SK-N-SH (cell line): ENCODE measurements at regions of chr7 and their contacts with region 1.

Region 1: DNA sequence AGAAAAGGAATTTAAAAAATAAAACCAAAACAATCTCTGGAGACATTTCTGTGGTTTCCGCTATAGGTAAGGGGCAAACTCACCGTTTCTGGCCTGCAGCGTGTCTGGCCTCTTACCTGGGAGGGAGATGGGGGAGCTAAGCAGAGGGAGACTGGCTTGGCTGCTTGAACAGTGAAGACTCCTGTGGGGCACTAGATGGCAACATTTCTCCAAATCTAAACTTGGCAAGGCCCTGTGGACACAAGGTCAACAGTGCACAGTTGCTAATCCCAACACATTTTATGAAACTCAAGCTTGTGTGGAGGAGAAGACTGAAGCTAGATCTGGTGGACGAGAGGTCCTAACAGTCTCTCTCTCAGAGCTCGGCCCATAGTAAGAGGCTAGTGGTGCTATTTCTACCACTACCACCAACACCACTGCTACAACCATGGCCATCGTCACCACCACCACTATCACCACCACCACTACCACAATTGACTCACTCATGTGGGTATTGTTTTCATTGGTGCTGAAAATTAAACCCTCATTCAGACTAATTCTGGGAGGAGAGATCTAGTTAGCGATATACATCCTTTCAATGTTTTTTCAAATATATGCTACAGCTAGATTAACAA is 28.4 kb upstream of the CDHR3 start:
- DNase-seq: peak; percentile 65
- H3K4me3 ChIP-seq: no peak overlapping the region
- H3K27ac ChIP-seq: no peak overlapping the region
- H3K4me1 ChIP-seq: peaks cover 20 to 21% of the 10 kb centered on the region in 2 experiments
- H3K27me3 ChIP-seq: no peaks in the 10 kb centered on the region
- CTCF ChIP-seq: peak; percentile 58
- EP300 ChIP-seq: no peak
- RAD21 ChIP-seq: peak; percentile 93

Region 2: DNA sequence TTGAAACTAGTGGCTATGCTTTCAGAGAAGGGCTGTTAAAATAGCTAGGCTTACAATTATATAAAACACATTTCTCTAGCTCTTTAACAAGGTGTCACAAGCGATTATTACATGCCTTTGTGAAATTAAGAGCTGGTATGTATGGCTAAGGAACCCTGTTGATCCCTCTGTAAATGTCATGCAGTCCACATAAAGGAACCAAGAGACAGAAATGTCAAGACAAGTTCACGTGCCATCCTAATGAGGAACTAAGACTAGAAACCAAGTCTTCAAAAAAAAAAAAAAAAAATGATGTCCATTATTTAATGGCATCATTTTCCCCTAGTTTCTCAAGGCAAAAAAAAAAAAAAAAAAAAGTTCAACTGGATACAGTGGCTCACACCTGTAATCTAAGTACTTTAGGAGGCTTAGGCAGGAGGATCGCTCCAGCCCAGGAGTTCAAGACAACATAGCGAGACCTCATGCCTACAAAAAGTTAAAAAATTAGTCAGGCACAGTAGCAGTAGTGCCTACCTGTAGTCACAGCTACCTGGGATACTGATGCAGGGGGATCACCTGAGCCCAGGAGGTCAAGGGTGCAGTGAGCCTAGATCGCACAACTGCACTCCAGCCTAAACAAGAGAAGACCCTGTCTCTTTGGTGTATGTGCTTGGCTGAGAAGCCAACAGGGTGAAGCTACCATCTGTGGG is 609.3 kb before region 1 on chr7:
- CTCF ChIA-PET with region 1: no interaction called
- POLR2A ChIA-PET with region 1: no interaction called
- DNase-seq: no peak
- H3K4me3 ChIP-seq: no peak overlapping the region
- H3K27ac ChIP-seq: no peak overlapping the region
- H3K4me1 ChIP-seq: no peaks in the 10 kb centered on the region
- H3K27me3 ChIP-seq: no peaks in the 10 kb centered on the region
- CTCF ChIP-seq: no peak
- EP300 ChIP-seq: no peak
- RAD21 ChIP-seq: no peak

Region 3: GRCh38 chr7:105426606-105427146 is 508.0 kb before region 1 on chr7:
- CTCF ChIA-PET with region 1: no interaction called
- POLR2A ChIA-PET with region 1: no interaction called
- DNase-seq: no peak
- H3K4me3 ChIP-seq: no peak overlapping the region
- H3K27ac ChIP-seq: no peak overlapping the region
- H3K4me1 ChIP-seq: no peaks in the 10 kb centered on the region
- H3K27me3 ChIP-seq: no peaks in the 10 kb centered on the region
- CTCF ChIP-seq: no peak
- EP300 ChIP-seq: no peak
- RAD21 ChIP-seq: no peak

Region 4: GRCh38 chr7:105769901-105770628 is 164.6 kb before region 1 on chr7:
- CTCF ChIA-PET with region 1: interaction called, 10 read pairs
- POLR2A ChIA-PET with region 1: no interaction called
- DNase-seq: peak; percentile 37
- H3K4me3 ChIP-seq: no peak overlapping the region
- H3K27ac ChIP-seq: peak overlapping the region; percentile 49 to 72; a peak in 3 of 4 replicates
- H3K4me1 ChIP-seq: peaks cover 25 to 35% of the 10 kb centered on the region in 2 experiments
- H3K27me3 ChIP-seq: no peaks in the 10 kb centered on the region
- CTCF ChIP-seq: no peak
- EP300 ChIP-seq: peak; percentile 50 to 61; a peak in 1 of 4 replicates
- RAD21 ChIP-seq: no peak; the same call in none of the 2 replicates

Region 5: DNA sequence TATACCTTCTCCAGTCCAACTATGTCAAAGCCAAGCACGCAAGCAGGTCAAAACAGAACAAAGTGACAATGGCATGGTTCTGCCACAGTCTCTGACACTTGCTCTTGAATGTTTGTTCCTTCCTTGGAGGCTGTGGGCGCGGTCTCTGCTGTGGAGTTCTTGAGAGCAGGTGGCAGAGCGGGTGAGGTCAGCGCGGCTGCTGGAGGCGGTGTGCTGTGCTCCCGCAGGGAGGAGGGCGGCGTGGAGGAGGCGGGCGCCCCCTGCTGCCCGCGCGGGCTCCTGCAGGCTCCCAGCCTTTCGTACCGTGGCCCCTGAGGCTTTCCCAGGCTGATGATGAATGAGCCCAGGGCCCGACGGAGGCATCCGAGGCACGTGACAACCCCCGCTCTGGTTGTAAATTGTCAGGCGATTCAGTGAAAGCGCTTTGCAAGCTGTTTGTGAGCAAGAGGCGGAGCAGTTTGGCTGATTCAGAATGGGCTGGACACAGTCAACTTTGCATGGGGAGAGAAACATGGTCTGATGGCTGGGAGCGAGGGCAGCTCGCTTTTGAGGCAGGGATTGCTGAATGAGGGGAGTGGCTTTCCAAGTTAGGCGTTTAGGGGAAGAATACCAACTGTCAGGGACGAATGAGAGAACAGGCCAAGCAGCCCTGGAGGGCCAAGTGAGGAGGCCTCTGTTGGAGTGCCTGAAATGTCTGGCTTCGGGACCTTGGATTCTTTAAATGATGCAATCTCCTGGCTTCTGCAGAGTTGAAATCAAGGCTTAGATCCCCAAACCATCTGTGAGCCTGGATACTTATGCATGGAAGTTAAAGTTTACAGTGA is 74.9 kb after region 1 on chr7:
- CTCF ChIA-PET with region 1: interaction called, 21 read pairs
- POLR2A ChIA-PET with region 1: no interaction called
- DNase-seq: peak; percentile 91
- H3K4me3 ChIP-seq: no peak overlapping the region; a peak in 1 of 4 replicates
- H3K27ac ChIP-seq: peak overlapping the region in 1 of 2 experiments; percentile 7; a peak in 1 of 4 replicates
- H3K4me1 ChIP-seq: peaks cover 8 to 24% of the 10 kb centered on the region in 2 experiments
- H3K27me3 ChIP-seq: no peaks in the 10 kb centered on the region
- CTCF ChIP-seq: peak; percentile 99
- EP300 ChIP-seq: 0 out of 4 replicates have a peak, but pooled peaks have one; percentile 26 to 36
- RAD21 ChIP-seq: peak; percentile 83

Region 6: GRCh38 chr7:106022193-106022821 is 87.6 kb after region 1 on chr7:
- CTCF ChIA-PET with region 1: interaction called, 16 read pairs
- POLR2A ChIA-PET with region 1: no interaction called
- DNase-seq: no peak
- H3K4me3 ChIP-seq: no peak overlapping the region
- H3K27ac ChIP-seq: no peak overlapping the region
- H3K4me1 ChIP-seq: peaks cover 13 to 18% of the 10 kb centered on the region in 2 experiments; a peak in 1 of 4 replicates
- H3K27me3 ChIP-seq: no peaks in the 10 kb centered on the region
- CTCF ChIP-seq: no peak
- EP300 ChIP-seq: no peak
- RAD21 ChIP-seq: no peak

Region 7: DNA sequence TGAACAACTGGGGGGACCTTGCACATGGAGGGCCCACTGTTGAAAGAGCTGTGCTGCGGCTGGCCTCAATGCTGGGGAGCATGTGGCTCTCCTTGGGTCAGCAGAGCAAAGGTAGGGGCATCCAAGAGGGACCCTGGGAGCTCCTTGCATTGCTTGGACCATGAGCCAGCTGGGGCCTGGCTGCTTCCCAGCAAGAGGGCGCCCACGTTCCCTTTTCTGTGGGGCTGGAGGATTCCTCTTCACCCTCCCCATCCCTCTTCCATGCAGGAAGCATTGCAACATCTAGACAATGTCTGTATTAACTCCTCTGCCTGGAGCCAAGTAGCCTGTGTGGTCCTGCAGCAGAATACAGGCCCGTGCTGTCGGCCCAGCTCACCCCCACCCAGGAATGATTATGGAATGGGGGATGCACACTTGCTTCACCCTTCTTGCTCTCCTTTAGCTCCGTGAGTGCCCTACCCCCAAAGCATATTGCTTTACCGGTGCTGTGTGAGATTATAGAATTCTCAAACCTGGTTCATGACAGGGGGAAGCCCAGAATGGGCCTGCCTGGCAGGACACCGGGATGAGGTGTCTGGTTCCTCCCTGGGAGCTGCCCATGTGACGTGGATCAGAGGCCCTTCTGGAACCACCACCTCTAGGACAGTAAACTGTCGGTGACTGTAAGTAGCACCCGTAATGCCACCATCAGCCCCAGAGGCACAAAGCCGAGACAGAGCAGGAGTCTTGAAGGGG is 115.5 kb after region 1 on chr7:
- CTCF ChIA-PET with region 1: interaction called, 188 read pairs
- POLR2A ChIA-PET with region 1: no interaction called
- DNase-seq: peak; percentile 37
- H3K4me3 ChIP-seq: no peak overlapping the region
- H3K27ac ChIP-seq: no peak overlapping the region
- H3K4me1 ChIP-seq: peaks cover 3 to 25% of the 10 kb centered on the region in 2 experiments; a peak in 1 of 4 replicates
- H3K27me3 ChIP-seq: no peaks in the 10 kb centered on the region
- CTCF ChIP-seq: peak; percentile 23
- EP300 ChIP-seq: no peak
- RAD21 ChIP-seq: peak; percentile 19

Region 8: DNA sequence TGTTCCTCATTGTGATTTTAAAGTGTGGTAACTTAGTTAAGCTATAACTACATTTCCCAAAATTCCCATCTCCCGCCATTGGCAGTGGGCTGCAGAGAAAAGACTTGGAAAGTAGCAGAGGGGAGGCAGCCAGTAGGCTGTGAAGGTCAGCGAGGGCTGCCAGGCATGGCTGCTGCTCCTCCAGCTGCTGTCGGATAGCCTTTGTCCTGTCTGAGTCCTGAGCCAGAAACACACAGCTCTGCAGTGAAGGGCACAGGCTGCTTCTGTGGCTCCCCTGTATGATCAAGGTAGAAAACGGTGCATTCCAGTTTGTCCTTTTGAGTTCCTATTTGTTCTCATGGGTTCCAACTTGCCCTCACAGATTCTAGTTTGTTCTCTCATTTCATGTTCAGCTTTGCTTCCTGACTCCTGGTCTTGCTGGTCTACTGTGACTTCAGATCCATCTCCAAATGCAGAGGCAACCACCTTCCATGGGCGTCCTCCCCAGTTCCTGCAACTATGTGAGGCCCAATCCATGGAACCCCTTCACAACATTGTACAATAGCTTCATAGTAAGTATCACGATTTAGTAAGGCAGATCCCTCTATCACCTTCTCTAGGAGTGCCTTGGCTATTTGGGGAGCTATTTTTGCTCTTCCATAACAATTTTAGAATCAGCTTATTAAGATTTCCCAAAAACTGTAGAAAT is 145.8 kb after region 1 on chr7:
- CTCF ChIA-PET with region 1: no interaction called
- POLR2A ChIA-PET with region 1: no interaction called
- DNase-seq: no peak
- H3K4me3 ChIP-seq: no peak overlapping the region
- H3K27ac ChIP-seq: no peak overlapping the region
- H3K4me1 ChIP-seq: no peaks in the 10 kb centered on the region; a peak in 1 of 4 replicates
- H3K27me3 ChIP-seq: no peaks in the 10 kb centered on the region
- CTCF ChIP-seq: no peak
- EP300 ChIP-seq: no peak
- RAD21 ChIP-seq: no peak

Region 9: GRCh38 chr7:106153891-106154449 is 219.3 kb after region 1 on chr7:
- CTCF ChIA-PET with region 1: interaction called, 40 read pairs
- POLR2A ChIA-PET with region 1: no interaction called
- DNase-seq: peak; percentile 86
- H3K4me3 ChIP-seq: no peak overlapping the region; a peak in 1 of 4 replicates
- H3K27ac ChIP-seq: no peak overlapping the region
- H3K4me1 ChIP-seq: peaks cover 10 to 19% of the 10 kb centered on the region in 2 experiments; a peak in 2 of 4 replicates
- H3K27me3 ChIP-seq: no peaks in the 10 kb centered on the region; the same call in 1 of the 2 replicates
- CTCF ChIP-seq: peak; percentile 100
- EP300 ChIP-seq: no peak
- RAD21 ChIP-seq: peak; percentile 100